Activated naive CD4-positive, alpha-beta T cell treated with anti-CD3 and anti-CD28 coated beads for 36 hours (primary cell): ENCODE measurements at regions of chr10 and their contacts with region 1.

Region 1: GRCh38 chr10:102596506-102596971 is 47.7 kb upstream of the TRIM8 start:
- DNase-seq: peak; percentile 58
- H3K4me3 Mint-ChIP-seq: no peak overlapping the region
- H3K27ac Mint-ChIP-seq: no peak overlapping the region
- H3K4me1 Mint-ChIP-seq: no peaks in the 10 kb centered on the region
- H3K27me3 Mint-ChIP-seq: no peaks in the 10 kb centered on the region

Region 2: DNA sequence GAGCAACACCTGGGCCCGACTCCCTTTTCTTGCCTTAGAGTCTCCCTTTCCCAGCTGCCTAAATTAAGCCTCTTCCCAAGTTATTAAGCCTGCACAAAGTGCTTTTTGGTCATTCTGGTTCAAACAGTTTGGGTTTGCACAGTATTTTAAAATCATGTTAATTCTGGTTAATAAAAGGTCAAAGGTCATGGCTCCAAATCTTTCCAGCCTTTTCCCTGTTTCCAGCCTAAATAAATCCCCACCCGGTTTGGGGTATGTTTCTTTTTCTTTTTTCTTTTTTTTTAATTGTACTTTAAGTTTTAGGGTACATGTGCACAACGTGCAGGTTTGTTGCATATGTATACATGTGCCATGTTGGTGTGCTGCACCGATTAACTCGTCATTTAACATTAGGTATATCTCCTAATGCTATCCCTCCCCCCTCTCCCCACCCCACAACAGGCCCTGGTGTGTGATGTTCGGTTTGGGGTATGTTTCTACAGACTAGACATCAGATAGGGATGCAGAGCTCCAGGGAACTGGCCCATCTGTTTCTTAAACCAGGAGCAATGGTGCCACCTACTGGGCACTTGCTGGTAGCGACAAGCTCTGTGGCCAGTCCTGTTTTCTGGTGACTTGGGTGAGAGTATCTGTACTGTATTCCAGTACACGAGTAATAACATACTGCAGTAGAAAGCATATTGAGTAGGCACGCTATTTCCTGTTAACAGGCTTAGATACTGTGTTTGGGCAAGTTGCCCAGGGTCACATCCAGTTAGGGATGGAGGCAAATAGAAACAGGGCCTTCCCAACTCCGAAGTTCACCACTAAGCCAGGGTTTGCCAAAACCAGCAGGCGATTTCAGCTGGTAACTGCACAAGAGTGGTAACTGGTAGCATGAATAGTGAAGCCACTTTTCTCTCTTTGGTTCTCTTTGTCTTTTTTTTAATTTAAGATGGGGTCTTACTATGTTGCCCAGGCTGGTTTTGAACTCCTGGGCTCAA is 12.8 kb before region 1 on chr10:
- CTCF ChIA-PET with region 1: interaction called, 32 read pairs
- intact Hi-C with region 1: no loop called
- DNase-seq: peak; percentile 94
- H3K4me3 Mint-ChIP-seq: no peak overlapping the region
- H3K27ac Mint-ChIP-seq: no peak overlapping the region
- H3K4me1 Mint-ChIP-seq: peaks cover 5% of the 10 kb centered on the region
- H3K27me3 Mint-ChIP-seq: no peaks in the 10 kb centered on the region